ENCODE measurements at regions of chr9 and their contacts with region 1.

Region 1: GRCh38 chr9:9170439-9171134 is 1371.0 kb upstream of the DMAC1 start:
- DNase-seq: no peak
- ATAC-seq: no peak
- H3K4me3 ChIP-seq: no peak overlapping the region
- H3K27ac ChIP-seq: no peak overlapping the region
- H3K4me1 ChIP-seq: no peaks in the 10 kb centered on the region
- H3K27me3 ChIP-seq: no peaks in the 10 kb centered on the region
- CTCF ChIP-seq: no peak
- POLR2A ChIP-seq: no peak

Region 2: DNA sequence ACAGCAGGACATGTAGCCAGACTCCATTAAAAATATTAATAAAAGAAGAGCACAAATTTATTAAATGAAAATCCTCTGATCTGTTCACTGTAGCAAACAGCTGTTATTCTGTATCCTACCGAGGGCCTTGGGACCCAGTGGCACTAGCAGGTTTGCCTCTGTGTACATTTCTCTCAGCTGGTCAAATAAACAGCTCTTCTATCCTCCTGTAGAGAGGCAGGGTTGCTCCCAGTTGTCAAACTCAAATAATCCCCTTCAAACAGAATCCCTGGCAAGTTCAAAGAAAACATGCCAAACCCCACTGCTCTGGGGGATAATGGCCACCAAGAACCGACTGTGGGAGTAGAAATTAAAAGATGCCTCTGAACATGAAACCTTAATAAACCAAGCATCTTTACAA is 109.0 kb before region 1 on chr9:
- in situ Hi-C with region 1: loop called in 1 of 4 experiments (anchors 25 kb)
- intact Hi-C with region 1: no loop called
- DNase-seq: no peak
- ATAC-seq: no peak
- H3K4me3 ChIP-seq: no peak overlapping the region
- H3K27ac ChIP-seq: no peak overlapping the region
- H3K4me1 ChIP-seq: no peaks in the 10 kb centered on the region
- H3K27me3 ChIP-seq: no peaks in the 10 kb centered on the region
- CTCF ChIP-seq: no peak
- POLR2A ChIP-seq: no peak

Region 3: DNA sequence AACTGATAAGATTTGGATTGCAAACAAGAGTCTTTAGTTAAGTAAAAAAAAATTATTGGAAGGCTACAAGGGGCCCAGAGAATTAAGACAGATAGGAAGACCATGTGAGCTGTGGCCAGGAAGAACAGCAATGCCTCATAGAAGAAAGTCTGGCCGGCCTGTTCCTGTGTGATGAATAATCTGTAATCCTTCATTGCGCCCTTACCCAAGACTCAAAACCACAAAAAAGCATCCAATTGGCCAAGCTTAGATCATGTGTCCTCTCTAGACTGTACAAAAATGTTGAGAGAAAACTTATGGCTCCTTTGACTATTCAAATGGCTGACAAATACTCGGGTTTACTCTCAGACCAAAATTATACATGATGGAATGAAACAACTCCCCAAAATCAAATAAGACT is 58.7 kb after region 1 on chr9:
- in situ Hi-C with region 1: no loop called
- intact Hi-C with region 1: no loop called
- DNase-seq: no peak
- ATAC-seq: no peak
- H3K4me3 ChIP-seq: no peak overlapping the region
- H3K27ac ChIP-seq: no peak overlapping the region
- H3K4me1 ChIP-seq: no peaks in the 10 kb centered on the region
- H3K27me3 ChIP-seq: no peaks in the 10 kb centered on the region
- CTCF ChIP-seq: no peak
- POLR2A ChIP-seq: no peak